PC-9 (cell line): ENCODE measurements at regions of chr2 and their contacts with region 1.

Region 1: GRCh38 chr2:100262555-100263320 is 59.6 kb downstream of the LONRF2 start:
- DNase-seq: peak in 1 of 2 experiments; percentile 56
- H3K4me3 ChIP-seq: no peak overlapping the region
- H3K27ac ChIP-seq: no peak overlapping the region
- H3K4me1 ChIP-seq: no peaks in the 10 kb centered on the region
- H3K27me3 ChIP-seq: peaks cover 90% of the 10 kb centered on the region
- CTCF ChIP-seq: peak; percentile 99

Region 2: GRCh38 chr2:99317166-99317872 is 945.4 kb before region 1 on chr2:
- CTCF ChIA-PET with region 1: interaction called, 12 read pairs
- POLR2A ChIA-PET with region 1: no interaction called
- intact Hi-C with region 1: no loop called
- DNase-seq: no peak
- H3K4me3 ChIP-seq: no peak overlapping the region
- H3K27ac ChIP-seq: no peak overlapping the region
- H3K4me1 ChIP-seq: no peaks in the 10 kb centered on the region
- H3K27me3 ChIP-seq: no peaks in the 10 kb centered on the region
- CTCF ChIP-seq: no peak

Region 3: DNA sequence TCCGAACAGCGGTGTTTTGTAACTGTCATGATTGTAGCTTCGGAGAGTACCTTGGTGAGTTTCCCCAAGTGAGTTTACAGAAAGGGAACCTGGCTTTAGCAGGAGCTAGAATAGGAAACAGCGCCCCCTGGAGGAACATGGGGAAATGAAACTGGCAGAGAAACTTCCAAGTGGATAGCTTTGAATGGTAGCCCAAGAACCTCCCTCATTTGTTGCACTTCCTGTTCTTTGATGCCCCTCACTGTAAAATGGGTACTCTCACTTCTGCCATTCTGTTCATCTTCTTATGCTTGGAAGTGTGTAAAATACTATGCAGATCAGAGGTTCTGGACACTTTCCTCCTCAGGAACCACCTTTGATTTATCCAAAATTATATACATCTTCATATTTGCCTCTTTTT is 118.5 kb after region 1 on chr2:
- CTCF ChIA-PET with region 1: interaction called, 4 read pairs
- POLR2A ChIA-PET with region 1: no interaction called
- intact Hi-C with region 1: loop called (anchors 1 kb)
- DNase-seq: peak; percentile 35 to 40
- H3K4me3 ChIP-seq: no peak overlapping the region
- H3K27ac ChIP-seq: no peak overlapping the region
- H3K4me1 ChIP-seq: no peaks in the 10 kb centered on the region
- H3K27me3 ChIP-seq: peaks cover 88% of the 10 kb centered on the region
- CTCF ChIP-seq: peak; percentile 90